ENCODE measurements at regions of chr5 and their contacts with region 1.

Region 1: DNA sequence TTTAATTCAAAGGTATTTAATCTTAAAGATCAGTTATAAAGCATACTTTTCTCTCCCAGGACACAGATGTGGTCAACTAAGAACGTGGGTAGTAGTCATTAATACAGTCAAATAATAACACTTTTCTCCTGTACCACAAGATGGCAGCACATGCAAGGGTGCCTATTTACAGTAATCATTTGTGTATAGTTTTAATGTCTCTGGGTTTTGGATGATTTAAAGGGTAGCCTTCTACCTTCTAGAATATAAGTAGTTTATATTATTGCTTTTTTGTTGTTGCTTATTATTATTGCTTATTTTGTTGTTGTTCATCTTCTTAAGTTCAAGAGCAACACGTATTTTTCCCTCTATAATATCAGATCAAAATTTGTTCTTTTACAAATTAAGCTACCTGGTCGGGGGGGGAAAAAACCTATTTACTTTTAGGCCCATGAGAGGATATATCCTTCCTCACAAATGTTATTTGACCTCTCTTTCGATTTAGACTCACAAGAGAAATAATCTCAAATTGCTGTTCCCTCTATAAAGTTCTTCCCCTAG is 59.6 kb upstream of the SLC27A6 start:
- DNase-seq: peak; percentile 73
- ATAC-seq: peak; percentile 94
- H3K4me3 ChIP-seq: no peak overlapping the region
- H3K27ac ChIP-seq: no peak overlapping the region
- H3K4me1 ChIP-seq: no peaks in the 10 kb centered on the region
- H3K27me3 ChIP-seq: peaks cover 26% of the 10 kb centered on the region
- CTCF ChIP-seq: peak; percentile 86

Region 2: GRCh38 chr5:129053438-129053837 is 147.8 kb after region 1 on chr5:
- CTCF ChIA-PET with region 1: no interaction called
- POLR2A ChIA-PET with region 1: no interaction called
- intact Hi-C with region 1: loop called (anchors 1 kb)
- DNase-seq: no peak
- ATAC-seq: no peak
- H3K4me3 ChIP-seq: no peak overlapping the region
- H3K27ac ChIP-seq: no peak overlapping the region
- H3K4me1 ChIP-seq: no peaks in the 10 kb centered on the region
- H3K27me3 ChIP-seq: no peaks in the 10 kb centered on the region; the same call in 1 of the 2 replicates
- CTCF ChIP-seq: 0 out of 2 replicates have a peak, but pooled peaks have one; percentile 23

Region 3: GRCh38 chr5:129094087-129094923 is 188.7 kb after region 1 on chr5 and contains the start of gene ISOC1:
- CTCF ChIA-PET with region 1: no interaction called
- POLR2A ChIA-PET with region 1: interaction called, 6 read pairs
- intact Hi-C with region 1: loop called (anchors 1 kb)
- DNase-seq: peak; percentile 95
- ATAC-seq: peak; percentile 88
- H3K4me3 ChIP-seq: peak within 1 kb of the TSS; percentile 86
- H3K27ac ChIP-seq: no peak within 1 kb of the TSS
- H3K4me1 ChIP-seq: peaks cover 21% of the 10 kb centered on the region; the same call in 1 of the 2 replicates
- H3K27me3 ChIP-seq: peaks cover 22% of the 10 kb centered on the region
- CTCF ChIP-seq: 0 out of 2 replicates have a peak, but pooled peaks have one; percentile 27
- total RNA-seq, gene ISOC1: 24.3 and 27.3 TPM in 2 replicates

Region 4: DNA sequence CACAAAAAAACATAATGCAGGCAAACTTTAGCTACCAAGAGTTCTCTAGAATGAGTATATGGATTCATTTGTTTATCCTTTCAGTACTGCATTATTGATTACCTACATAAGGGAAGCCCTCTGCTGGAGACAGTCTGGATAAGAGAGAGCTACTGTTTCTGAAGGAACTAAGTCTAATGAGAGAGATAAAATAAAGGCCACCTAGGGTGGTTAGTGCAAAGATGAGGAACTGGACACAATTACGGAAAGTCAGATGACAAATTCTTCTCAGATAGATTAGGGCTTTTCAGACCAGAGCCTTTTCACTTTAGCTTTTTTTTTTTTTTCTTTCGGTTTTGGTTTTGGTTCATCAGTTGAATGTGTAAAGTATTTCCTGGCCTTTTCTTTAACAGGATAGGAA is 220.2 kb after region 1 on chr5:
- CTCF ChIA-PET with region 1: no interaction called
- POLR2A ChIA-PET with region 1: no interaction called
- intact Hi-C with region 1: loop called (anchors 1 kb)
- DNase-seq: no peak
- ATAC-seq: no peak
- H3K4me3 ChIP-seq: no peak overlapping the region
- H3K27ac ChIP-seq: no peak overlapping the region
- H3K4me1 ChIP-seq: 0 out of 2 replicates have a peak, but pooled peaks cover 9% of the 10 kb centered on the region
- H3K27me3 ChIP-seq: no peaks in the 10 kb centered on the region
- CTCF ChIP-seq: peak; percentile 28; the same call in 1 of the 2 replicates